Natural killer cell (primary cell): ENCODE measurements at regions of chr19 and their contacts with region 1.

Region 1: GRCh38 chr19:37217855-37218591 is at the start of gene ZNF383:
- DNase-seq: peak; percentile 81 to 88
- ATAC-seq: peak; percentile 83 to 93 (median 90)
- H3K4me3 ChIP-seq: peak within 1 kb of the TSS; percentile 87
- H3K4me3 Mint-ChIP-seq: peak within 1 kb of the TSS; percentile 87
- H3K27ac ChIP-seq: peak within 1 kb of the TSS; percentile 88
- H3K27ac Mint-ChIP-seq: peak within 1 kb of the TSS; percentile 85 to 96
- H3K4me1 ChIP-seq: peaks cover 8% of the 10 kb centered on the region
- H3K4me1 Mint-ChIP-seq: peaks cover 26 to 32% of the 10 kb centered on the region in 2 donors
- H3K27me3 ChIP-seq: no peaks in the 10 kb centered on the region
- H3K27me3 Mint-ChIP-seq: peaks cover 0 to 2% of the 10 kb centered on the region in 2 donors
- CTCF ChIP-seq: no peak
- total RNA-seq, gene ZNF383: 21.6 to 27.1 (median 26.4) TPM

Region 2: GRCh38 chr19:36214386-36215275 is 1003.4 kb before region 1 on chr19 and contains the starts of genes ZNF146 and ZNF565:
- intact Hi-C with region 1: loop called (anchors 2 kb)
- DNase-seq: peak; percentile 90 to 97
- ATAC-seq: peak; percentile 81 to 95 (median 86)
- H3K4me3 ChIP-seq: peak within 1 kb of the TSS; percentile 92
- H3K4me3 Mint-ChIP-seq: no peak within 1 kb of the TSS
- H3K27ac ChIP-seq: peak within 1 kb of the TSS; percentile 91
- H3K27ac Mint-ChIP-seq: no peak within 1 kb of the TSS
- H3K4me1 ChIP-seq: peaks cover 18% of the 10 kb centered on the region
- H3K4me1 Mint-ChIP-seq: peaks cover 12 to 14% of the 10 kb centered on the region in 2 donors
- H3K27me3 ChIP-seq: no peaks in the 10 kb centered on the region
- H3K27me3 Mint-ChIP-seq: no peaks in the 10 kb centered on the region
- CTCF ChIP-seq: no peak
- total RNA-seq, gene ZNF146: 20.3 to 37.3 (median 21.5) TPM
- total RNA-seq, gene ZNF565: 7.7 to 19.1 (median 10.5) TPM

Region 3: GRCh38 chr19:36915992-36916830 is 301.8 kb before region 1 on chr19 and contains the starts of genes ZNF568 and ZNF829:
- intact Hi-C with region 1: loop called (anchors 2 kb)
- DNase-seq: peak; percentile 90 to 96
- ATAC-seq: peak; percentile 92 to 98 (median 94)
- H3K4me3 ChIP-seq: peak within 1 kb of the TSS; percentile 66
- H3K4me3 Mint-ChIP-seq: peak within 1 kb of the TSS; percentile 87
- H3K27ac ChIP-seq: peak within 1 kb of the TSS; percentile 95
- H3K27ac Mint-ChIP-seq: peak within 1 kb of the TSS; percentile 89 to 93
- H3K4me1 ChIP-seq: peaks cover 13% of the 10 kb centered on the region
- H3K4me1 Mint-ChIP-seq: peaks cover 35% of the 10 kb centered on the region in 2 donors
- H3K27me3 ChIP-seq: no peaks in the 10 kb centered on the region
- H3K27me3 Mint-ChIP-seq: no peaks in the 10 kb centered on the region
- CTCF ChIP-seq: peak; percentile 75
- total RNA-seq, gene ZNF568: 9.4 to 15.5 (median 15.3) TPM
- total RNA-seq, gene ZNF829: 5.5 to 7.6 (median 5.5) TPM

Region 4: GRCh38 chr19:36997152-36997842 is 220.7 kb before region 1 on chr19:
- intact Hi-C with region 1: no loop called
- DNase-seq: no peak
- ATAC-seq: no peak
- H3K4me3 ChIP-seq: no peak overlapping the region
- H3K4me3 Mint-ChIP-seq: no peak overlapping the region
- H3K27ac ChIP-seq: no peak overlapping the region
- H3K27ac Mint-ChIP-seq: no peak overlapping the region
- H3K4me1 ChIP-seq: no peaks in the 10 kb centered on the region
- H3K4me1 Mint-ChIP-seq: no peaks in the 10 kb centered on the region
- H3K27me3 ChIP-seq: no peaks in the 10 kb centered on the region
- H3K27me3 Mint-ChIP-seq: no peaks in the 10 kb centered on the region
- CTCF ChIP-seq: no peak

Region 5: GRCh38 chr19:37127999-37128820 is 89.8 kb before region 1 on chr19:
- intact Hi-C with region 1: no loop called
- DNase-seq: no peak
- ATAC-seq: no peak
- H3K4me3 ChIP-seq: no peak overlapping the region
- H3K4me3 Mint-ChIP-seq: no peak overlapping the region
- H3K27ac ChIP-seq: no peak overlapping the region
- H3K27ac Mint-ChIP-seq: no peak overlapping the region
- H3K4me1 ChIP-seq: no peaks in the 10 kb centered on the region
- H3K4me1 Mint-ChIP-seq: no peaks in the 10 kb centered on the region
- H3K27me3 ChIP-seq: no peaks in the 10 kb centered on the region
- H3K27me3 Mint-ChIP-seq: no peaks in the 10 kb centered on the region
- CTCF ChIP-seq: no peak

Region 6: DNA sequence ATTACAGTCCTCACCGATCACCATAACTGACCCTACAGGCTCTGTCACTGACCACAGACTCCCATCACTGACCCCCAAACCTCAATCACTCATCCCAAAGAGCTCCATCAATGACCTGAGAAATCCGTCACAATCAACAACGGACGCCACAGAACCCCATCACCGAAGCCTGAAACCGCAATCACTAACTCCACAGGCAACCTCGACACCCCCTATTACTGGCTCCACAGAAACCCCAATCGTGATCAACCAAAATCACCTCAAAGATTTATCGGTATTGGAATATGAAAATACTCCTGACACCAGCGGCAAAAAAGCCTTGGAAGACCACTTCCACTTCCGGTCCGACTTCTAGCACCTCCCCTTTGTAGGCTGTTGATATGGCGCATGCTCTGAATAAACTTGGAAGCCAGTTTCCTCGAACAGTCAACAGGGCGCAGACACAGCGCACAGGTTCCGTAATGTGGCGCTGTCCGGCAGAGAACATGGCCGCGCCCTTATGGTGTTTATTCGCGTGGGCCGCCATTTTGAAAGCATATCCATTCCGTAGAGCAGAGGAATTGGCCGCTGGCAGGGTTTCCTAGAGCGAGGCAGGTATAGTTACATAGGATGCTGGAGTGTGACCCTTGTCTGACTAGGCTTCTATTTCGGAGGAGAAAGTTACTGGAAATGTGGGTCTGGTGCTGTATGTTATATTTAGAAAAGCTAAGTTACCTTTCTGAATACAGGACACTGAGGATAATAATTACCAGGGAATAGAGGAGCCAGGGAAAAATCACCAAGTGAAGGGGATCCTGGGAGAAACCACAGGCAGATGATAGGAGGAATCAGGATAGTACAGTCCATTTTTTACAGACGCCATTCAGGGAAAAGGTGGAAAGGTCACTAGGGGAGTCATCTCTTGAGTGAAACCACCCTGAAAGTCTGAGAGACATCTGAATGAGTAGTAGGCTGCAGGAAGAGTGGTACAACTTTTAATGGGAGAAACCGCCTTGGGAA is 45.4 kb before region 1 on chr19 and contains the start of gene ZNF585A:
- intact Hi-C with region 1: loop called (anchors 2 kb)
- DNase-seq: peak; percentile 86 to 97
- ATAC-seq: peak; percentile 98 to 99 (median 99)
- H3K4me3 ChIP-seq: peak within 1 kb of the TSS; percentile 71
- H3K4me3 Mint-ChIP-seq: no peak within 1 kb of the TSS
- H3K27ac ChIP-seq: peak within 1 kb of the TSS; percentile 79
- H3K27ac Mint-ChIP-seq: no peak within 1 kb of the TSS
- H3K4me1 ChIP-seq: peaks cover 2% of the 10 kb centered on the region
- H3K4me1 Mint-ChIP-seq: peaks cover 0 to 4% of the 10 kb centered on the region in 2 donors
- H3K27me3 ChIP-seq: no peaks in the 10 kb centered on the region
- H3K27me3 Mint-ChIP-seq: no peaks in the 10 kb centered on the region
- CTCF ChIP-seq: no peak
- total RNA-seq, gene ZNF585A: 8.9 to 12.6 (median 9.9) TPM

Region 7: DNA sequence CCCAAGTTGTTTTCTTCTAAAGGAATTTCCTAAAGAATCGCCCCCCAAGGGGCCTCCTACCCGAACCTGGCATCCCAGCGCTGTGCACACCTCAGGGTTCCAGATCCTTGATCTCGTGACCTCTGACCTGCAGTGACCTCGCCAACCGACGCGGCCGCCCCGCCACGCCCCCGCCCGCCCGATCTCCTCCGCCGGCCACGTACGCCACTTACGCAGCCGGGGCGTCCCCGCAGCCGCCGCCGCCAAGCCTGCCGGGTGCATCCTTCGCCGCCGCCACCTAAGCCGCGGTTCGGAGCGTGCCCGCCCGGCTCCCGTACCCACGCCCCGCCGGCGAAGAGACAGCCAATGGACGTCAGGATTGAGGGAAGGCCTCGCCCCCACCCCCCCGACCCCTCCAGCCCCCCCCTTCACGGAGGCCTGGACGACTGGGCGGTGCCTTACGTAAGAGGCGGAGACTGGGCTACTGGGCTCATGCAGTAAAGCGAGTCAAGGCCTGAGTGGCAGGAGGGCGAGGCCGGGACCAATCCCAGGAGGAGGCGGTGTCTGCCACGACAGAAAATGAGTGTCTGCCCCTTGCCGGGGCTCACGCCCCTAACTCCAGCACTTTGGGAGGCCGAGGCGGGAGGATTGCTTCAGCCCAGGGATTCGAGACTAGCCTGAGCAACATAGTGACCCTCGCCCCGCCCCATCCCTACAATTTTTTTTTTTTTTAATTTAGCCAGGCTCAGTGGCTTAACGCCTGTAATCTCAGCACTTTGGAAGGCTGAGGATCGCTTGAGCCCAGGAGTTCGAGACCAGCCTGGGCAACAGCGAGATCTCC is 1097.8 kb after region 1 on chr19 and contains the start of gene YIF1B:
- intact Hi-C with region 1: loop called (anchors 10 kb)
- DNase-seq: peak; percentile 95 to 97
- ATAC-seq: peak; percentile 89 to 96 (median 91)
- H3K4me3 ChIP-seq: peak within 1 kb of the TSS; percentile 82
- H3K4me3 Mint-ChIP-seq: peak within 1 kb of the TSS; percentile 89
- H3K27ac ChIP-seq: peak within 1 kb of the TSS; percentile 94
- H3K27ac Mint-ChIP-seq: peak within 1 kb of the TSS; percentile 76 to 82
- H3K4me1 ChIP-seq: peaks cover 51% of the 10 kb centered on the region
- H3K4me1 Mint-ChIP-seq: peaks cover 15 to 29% of the 10 kb centered on the region in 2 donors
- H3K27me3 ChIP-seq: no peaks in the 10 kb centered on the region
- H3K27me3 Mint-ChIP-seq: peaks cover 0 to 15% of the 10 kb centered on the region in 2 donors
- CTCF ChIP-seq: no peak
- total RNA-seq, gene YIF1B: 23.2 to 28.4 (median 24.1) TPM